ENCODE measurements at regions of chr1 and their contacts with region 1.

Region 1: GRCh38 chr1:235971571-235972310 is 93.1 kb downstream of the NID1 start:
- DNase-seq: peak; percentile 88 to 91
- ATAC-seq: peak; percentile 98

Region 2: GRCh38 chr1:235866913-235867845 is 104.6 kb before region 1 on chr1:
- intact Hi-C with region 1: loop called in 1 of 2 experiments (anchors 5 kb)
- DNase-seq: peak; percentile 93 to 96
- ATAC-seq: peak; percentile 94

Measured in left colon (tissue), 2 donors.